ENCODE measurements at regions of chr10 and their contacts with region 1.

Region 1: DNA sequence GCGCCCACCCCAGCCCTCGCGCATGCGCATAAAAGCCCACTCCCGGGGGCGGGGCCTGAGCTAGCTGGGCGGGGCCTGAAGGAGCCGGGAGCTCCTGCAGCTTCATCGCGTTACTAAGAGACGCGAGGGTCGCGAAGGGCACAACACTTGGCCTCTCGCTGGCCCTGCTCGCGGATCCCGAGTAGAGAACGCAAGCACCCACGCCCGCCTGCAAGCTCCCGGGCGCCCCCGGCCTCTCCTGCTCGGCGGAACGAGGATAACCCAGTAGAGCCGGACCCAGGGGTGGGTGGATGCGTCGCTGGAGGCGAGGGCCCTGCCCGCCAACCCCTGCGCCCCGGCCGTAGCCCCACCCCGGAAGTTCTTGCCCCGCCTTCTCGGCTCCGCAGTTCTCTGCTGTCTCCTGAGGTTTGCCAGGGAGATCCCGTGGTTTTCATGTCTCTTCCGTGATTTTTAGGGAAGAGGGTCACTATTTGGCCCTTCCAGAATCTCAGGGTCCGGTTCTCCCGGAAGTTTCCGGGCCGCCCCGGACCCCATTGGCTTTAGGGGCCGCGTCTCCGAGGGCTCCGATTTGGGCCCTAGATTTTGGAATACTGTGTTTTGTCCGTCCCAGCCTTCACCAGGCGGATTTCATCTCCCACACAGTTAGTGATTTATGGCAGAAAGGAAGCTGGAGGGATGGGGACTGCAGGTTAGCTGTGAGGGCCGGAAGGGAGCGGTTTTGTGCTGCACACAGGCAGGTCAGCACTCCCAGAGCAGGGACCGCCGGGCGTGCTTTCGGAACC is at the start of gene MEIG1:
- DNase-seq: peak; percentile 91
- H3K4me3 Mint-ChIP-seq: peak within 1 kb of the TSS; percentile 98
- H3K27ac Mint-ChIP-seq: peak within 1 kb of the TSS; percentile 98
- H3K4me1 Mint-ChIP-seq: peaks cover 27% of the 10 kb centered on the region
- H3K27me3 Mint-ChIP-seq: no peaks in the 10 kb centered on the region
- total RNA-seq, gene MEIG1: 0.81 to 0.93 TPM

Region 2: GRCh38 chr10:14736600-14737081 is 222.8 kb before region 1 on chr10:
- CTCF ChIA-PET with region 1: no interaction called
- intact Hi-C with region 1: no loop called
- DNase-seq: no peak
- H3K4me3 Mint-ChIP-seq: no peak overlapping the region
- H3K27ac Mint-ChIP-seq: no peak overlapping the region
- H3K4me1 Mint-ChIP-seq: peaks cover 7% of the 10 kb centered on the region
- H3K27me3 Mint-ChIP-seq: no peaks in the 10 kb centered on the region

Region 3: DNA sequence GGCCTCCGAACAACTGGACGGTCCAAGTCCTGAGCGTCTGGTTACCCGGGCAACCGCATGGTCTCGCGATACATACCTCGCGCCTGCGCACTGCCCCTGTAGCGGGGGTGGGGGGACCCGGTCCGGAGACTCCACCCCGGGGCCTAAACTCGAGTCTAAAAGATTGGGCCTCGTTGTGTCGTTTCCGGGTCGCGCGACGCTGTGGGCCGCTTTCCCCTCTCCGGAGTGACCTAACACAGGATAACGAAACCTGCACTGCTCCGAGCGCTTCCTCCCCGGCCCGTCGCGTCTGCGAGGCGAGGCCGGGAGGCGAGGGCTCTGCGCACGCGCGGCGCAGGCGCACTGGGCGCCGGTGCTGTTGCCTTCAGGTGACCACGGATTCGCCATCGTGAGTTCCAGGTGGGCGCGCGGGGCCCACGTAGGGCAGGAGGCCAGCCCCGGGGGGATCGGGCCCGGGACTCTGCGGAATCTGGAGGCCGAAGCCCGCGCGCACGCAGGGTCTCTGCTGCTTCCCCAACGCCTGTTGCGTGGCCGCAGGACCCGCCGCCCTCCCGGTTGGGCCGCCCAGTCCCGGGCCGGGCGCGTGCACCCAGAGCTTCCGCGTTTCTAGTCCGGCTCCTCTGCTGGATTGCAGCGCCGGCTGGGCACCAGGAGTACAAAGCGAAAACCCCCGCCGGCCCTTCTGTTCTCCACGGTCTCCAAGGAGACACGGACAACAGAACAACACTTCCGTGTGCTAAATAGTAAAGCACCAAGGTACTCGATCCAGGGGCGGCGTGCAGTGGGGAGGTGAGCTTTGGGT is 137.7 kb after region 1 on chr10 and contains the start of gene RPP38:
- CTCF ChIA-PET with region 1: no interaction called
- intact Hi-C with region 1: loop called (anchors 1 kb)
- DNase-seq: peak; percentile 96
- H3K4me3 Mint-ChIP-seq: peak within 1 kb of the TSS; percentile 97
- H3K27ac Mint-ChIP-seq: peak within 1 kb of the TSS; percentile 94
- H3K4me1 Mint-ChIP-seq: peaks cover 36% of the 10 kb centered on the region
- H3K27me3 Mint-ChIP-seq: no peaks in the 10 kb centered on the region
- total RNA-seq, gene RPP38: 15.6 to 16.3 TPM